CD8-positive, alpha-beta T cell (primary cell): ENCODE measurements at regions of chr18 and their contacts with region 1.

Region 1: DNA sequence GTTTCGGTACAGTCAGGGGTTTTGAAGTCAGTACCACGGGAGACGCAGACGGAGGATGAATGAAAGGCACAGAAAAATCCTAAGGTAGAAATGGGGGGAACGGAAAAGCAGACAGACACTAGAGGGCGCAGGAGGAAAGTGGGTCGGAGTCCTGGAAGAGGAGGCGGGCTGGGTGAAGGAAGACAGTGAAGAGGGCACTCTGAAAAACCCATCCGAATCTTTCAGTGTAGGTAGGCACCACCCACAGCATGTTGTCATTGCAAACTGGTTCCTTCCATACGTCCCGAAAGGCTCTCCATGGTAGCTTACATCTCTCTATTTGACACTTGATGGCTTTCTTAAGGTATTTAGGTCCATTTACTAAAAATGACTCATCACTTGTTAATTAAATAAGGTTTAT is 18.5 kb upstream of the ZNF236 start:
- DNase-seq: peak; percentile 46 to 82 (median 75)
- ATAC-seq: peak; percentile 84
- H3K4me3 ChIP-seq: no peak overlapping the region
- H3K4me3 Mint-ChIP-seq: peak overlapping the region; percentile 43
- H3K27ac ChIP-seq: no peak overlapping the region
- H3K27ac Mint-ChIP-seq: no peak overlapping the region
- H3K4me1 ChIP-seq: peaks cover 7% of the 10 kb centered on the region
- H3K4me1 Mint-ChIP-seq: peaks cover 12% of the 10 kb centered on the region
- H3K27me3 ChIP-seq: peaks cover 0 to 5% of the 10 kb centered on the region in 2 experiments
- H3K27me3 Mint-ChIP-seq: peaks cover 16% of the 10 kb centered on the region
- CTCF ChIP-seq: peak; percentile 74

Region 2: GRCh38 chr18:76398896-76399612 is 404.8 kb before region 1 on chr18:
- CTCF ChIA-PET with region 1: interaction called, 8 read pairs
- POLR2A ChIA-PET with region 1: no interaction called
- intact Hi-C with region 1: loop called in 1 of 2 experiments (anchors 2 kb)
- DNase-seq: peak; percentile 57 to 86 (median 78)
- ATAC-seq: peak; percentile 96
- H3K4me3 ChIP-seq: no peak overlapping the region
- H3K4me3 Mint-ChIP-seq: no peak overlapping the region
- H3K27ac ChIP-seq: no peak overlapping the region
- H3K27ac Mint-ChIP-seq: no peak overlapping the region
- H3K4me1 ChIP-seq: no peaks in the 10 kb centered on the region
- H3K4me1 Mint-ChIP-seq: peaks cover 6% of the 10 kb centered on the region
- H3K27me3 ChIP-seq: no peaks in the 10 kb centered on the region
- H3K27me3 Mint-ChIP-seq: peaks cover 4% of the 10 kb centered on the region
- CTCF ChIP-seq: peak; percentile 96

Region 3: GRCh38 chr18:76791106-76791505 is 12.7 kb before region 1 on chr18:
- CTCF ChIA-PET with region 1: interaction called, 69 read pairs
- POLR2A ChIA-PET with region 1: no interaction called
- intact Hi-C with region 1: no loop called
- DNase-seq: no peak
- ATAC-seq: no peak
- H3K4me3 ChIP-seq: no peak overlapping the region
- H3K4me3 Mint-ChIP-seq: no peak overlapping the region
- H3K27ac ChIP-seq: no peak overlapping the region
- H3K27ac Mint-ChIP-seq: no peak overlapping the region
- H3K4me1 ChIP-seq: no peaks in the 10 kb centered on the region
- H3K4me1 Mint-ChIP-seq: peaks cover 2% of the 10 kb centered on the region
- H3K27me3 ChIP-seq: no peaks in the 10 kb centered on the region
- H3K27me3 Mint-ChIP-seq: peaks cover 23% of the 10 kb centered on the region
- CTCF ChIP-seq: no peak

Region 4: GRCh38 chr18:76847916-76848315 is 44.1 kb after region 1 on chr18:
- CTCF ChIA-PET with region 1: interaction called, 8 read pairs
- POLR2A ChIA-PET with region 1: no interaction called
- intact Hi-C with region 1: loop called in 1 of 2 experiments (anchors 5 kb)
- DNase-seq: no peak
- ATAC-seq: no peak
- H3K4me3 ChIP-seq: no peak overlapping the region
- H3K4me3 Mint-ChIP-seq: no peak overlapping the region
- H3K27ac ChIP-seq: no peak overlapping the region
- H3K27ac Mint-ChIP-seq: no peak overlapping the region
- H3K4me1 ChIP-seq: no peaks in the 10 kb centered on the region
- H3K4me1 Mint-ChIP-seq: peaks cover 32% of the 10 kb centered on the region
- H3K27me3 ChIP-seq: no peaks in the 10 kb centered on the region
- H3K27me3 Mint-ChIP-seq: no peaks in the 10 kb centered on the region
- CTCF ChIP-seq: no peak

Region 5: DNA sequence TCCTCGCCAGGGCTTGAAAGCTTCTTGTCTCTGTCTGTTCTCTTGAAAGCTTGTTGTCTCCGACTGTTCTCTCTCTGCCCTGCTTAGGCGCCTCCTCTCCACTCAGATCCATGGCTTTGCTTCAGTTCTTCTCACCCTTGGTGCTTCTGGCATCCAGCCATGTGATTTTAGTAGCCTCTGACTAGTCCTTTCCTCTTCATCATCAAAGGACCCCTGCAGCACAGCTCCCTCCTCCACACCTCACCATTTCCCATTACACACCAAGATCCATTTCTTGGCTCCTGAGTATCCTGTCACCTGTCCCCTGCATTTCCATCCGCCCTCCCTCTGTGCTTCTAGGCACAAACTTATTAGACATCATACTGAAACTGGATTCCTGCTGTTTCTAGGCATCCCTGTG is 77.9 kb after region 1 on chr18:
- CTCF ChIA-PET with region 1: interaction called, 15 read pairs
- POLR2A ChIA-PET with region 1: no interaction called
- intact Hi-C with region 1: loop called in 1 of 2 experiments (anchors 5 kb)
- DNase-seq: no peak
- ATAC-seq: no peak
- H3K4me3 ChIP-seq: no peak overlapping the region
- H3K4me3 Mint-ChIP-seq: no peak overlapping the region
- H3K27ac ChIP-seq: no peak overlapping the region
- H3K27ac Mint-ChIP-seq: no peak overlapping the region
- H3K4me1 ChIP-seq: no peaks in the 10 kb centered on the region
- H3K4me1 Mint-ChIP-seq: no peaks in the 10 kb centered on the region
- H3K27me3 ChIP-seq: no peaks in the 10 kb centered on the region
- H3K27me3 Mint-ChIP-seq: no peaks in the 10 kb centered on the region
- CTCF ChIP-seq: no peak

Region 6: DNA sequence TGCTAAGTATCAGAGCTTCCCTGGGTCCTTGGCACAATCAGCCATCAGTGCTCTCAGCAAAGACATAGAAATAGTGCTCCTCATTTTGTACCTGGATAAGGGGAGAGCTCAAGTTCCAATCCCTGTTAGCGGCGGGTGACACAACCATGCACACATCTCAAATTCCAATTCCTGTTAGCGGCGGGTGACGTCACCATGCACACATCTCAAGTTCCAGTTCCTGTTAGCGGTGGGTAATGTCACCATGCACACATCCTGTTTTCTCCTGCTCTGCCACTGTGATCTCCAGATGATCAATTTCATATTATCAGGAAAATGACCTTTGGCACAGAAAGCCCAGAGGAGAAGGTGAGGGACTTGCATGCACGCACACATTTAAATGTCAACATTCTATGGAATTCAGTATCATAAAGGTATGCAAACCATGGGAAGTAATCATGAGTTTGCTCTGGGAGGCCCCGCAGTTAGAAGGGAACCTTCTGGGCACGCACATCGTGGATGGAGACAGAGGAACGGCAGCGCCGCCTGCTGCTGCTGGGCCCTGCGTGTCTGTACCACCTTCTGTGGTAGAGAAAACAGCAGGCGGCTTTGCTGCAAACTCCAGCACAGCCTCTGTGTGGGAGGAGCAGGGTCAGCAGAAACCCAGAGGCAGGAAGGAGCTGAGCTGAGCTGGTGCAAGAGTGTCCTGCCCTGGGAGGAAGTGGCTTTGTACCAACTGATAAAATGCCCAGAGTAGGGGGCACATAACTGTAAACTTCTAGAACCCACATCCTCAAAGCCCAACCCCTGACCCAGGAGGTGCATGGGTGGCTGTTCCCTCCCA is 251.0 kb after region 1 on chr18:
- CTCF ChIA-PET with region 1: interaction called, 4 read pairs
- POLR2A ChIA-PET with region 1: no interaction called
- intact Hi-C with region 1: loop called in 1 of 2 experiments (anchors 5 kb)
- DNase-seq: peak; percentile 68 to 94 (median 86)
- ATAC-seq: peak; percentile 78
- H3K4me3 ChIP-seq: peak overlapping the region; percentile 35 to 44
- H3K4me3 Mint-ChIP-seq: peak overlapping the region; percentile 71
- H3K27ac ChIP-seq: peak overlapping the region; percentile 80 to 95
- H3K27ac Mint-ChIP-seq: peak overlapping the region; percentile 98
- H3K4me1 ChIP-seq: peaks cover 64% of the 10 kb centered on the region
- H3K4me1 Mint-ChIP-seq: peaks cover 69% of the 10 kb centered on the region
- H3K27me3 ChIP-seq: no peaks in the 10 kb centered on the region
- H3K27me3 Mint-ChIP-seq: no peaks in the 10 kb centered on the region
- CTCF ChIP-seq: peak; percentile 53